HCT116 (cell line): ENCODE measurements at regions of chr18 and their contacts with region 1.

Region 1: GRCh38 chr18:70454704-70455322 is 166.0 kb downstream of the SOCS6 start:
- DNase-seq: peak; percentile 67
- ATAC-seq: peak; percentile 83
- H3K4me3 ChIP-seq: no peak overlapping the region
- H3K27ac ChIP-seq: no peak overlapping the region
- H3K4me1 ChIP-seq: 0 out of 4 replicates have a peak, but pooled peaks cover 0 to 5% of the 10 kb centered on the region in 2 experiments
- H3K27me3 ChIP-seq: no peaks in the 10 kb centered on the region
- CTCF ChIP-seq: peak; percentile 54 to 85 (median 73); a peak in 5 of 6 replicates
- POLR2A ChIP-seq: no peak
- RAD21 ChIP-seq: peak; percentile 84

Region 2: GRCh38 chr18:68847219-68847837 is 1607.5 kb before region 1 on chr18:
- CTCF ChIA-PET with region 1: no interaction called
- POLR2A ChIA-PET with region 1: no interaction called
- RAD21 ChIA-PET with region 1: no interaction called
- intact Hi-C with region 1: loop called (anchors 10 kb)
- DNase-seq: peak; percentile 19
- ATAC-seq: peak; percentile 52
- H3K4me3 ChIP-seq: no peak overlapping the region
- H3K27ac ChIP-seq: no peak overlapping the region
- H3K4me1 ChIP-seq: no peaks in the 10 kb centered on the region
- H3K27me3 ChIP-seq: no peaks in the 10 kb centered on the region
- CTCF ChIP-seq: peak; percentile 38 to 75 (median 38); a peak in 5 of 6 replicates
- POLR2A ChIP-seq: no peak
- RAD21 ChIP-seq: peak; percentile 65

Region 3: GRCh38 chr18:70107091-70107490 is 347.7 kb before region 1 on chr18:
- CTCF ChIA-PET with region 1: no interaction called
- POLR2A ChIA-PET with region 1: no interaction called
- RAD21 ChIA-PET with region 1: no interaction called
- intact Hi-C with region 1: no loop called
- DNase-seq: no peak
- ATAC-seq: no peak
- H3K4me3 ChIP-seq: no peak overlapping the region
- H3K27ac ChIP-seq: no peak overlapping the region
- H3K4me1 ChIP-seq: no peaks in the 10 kb centered on the region
- H3K27me3 ChIP-seq: no peaks in the 10 kb centered on the region
- CTCF ChIP-seq: no peak
- POLR2A ChIP-seq: no peak
- RAD21 ChIP-seq: no peak

Region 4: DNA sequence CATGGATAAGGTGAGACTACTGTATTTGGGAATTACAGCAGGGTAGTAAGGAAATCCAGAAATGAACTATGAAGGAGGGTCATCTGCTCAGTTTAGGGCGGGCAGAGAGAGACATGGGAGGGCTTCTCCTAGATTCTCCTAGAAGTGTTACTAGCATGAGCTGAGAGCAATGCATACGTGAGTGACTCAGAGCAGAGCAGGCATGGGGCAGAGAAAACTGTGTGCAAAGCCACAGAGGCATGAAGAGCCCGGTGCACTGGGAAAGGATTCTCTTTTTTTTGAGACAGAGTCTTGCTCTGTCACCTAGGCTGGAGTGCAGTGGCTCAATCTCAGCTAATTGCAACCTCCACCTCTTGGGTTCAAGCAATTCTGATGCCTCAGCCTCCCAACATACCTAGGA is 49.8 kb before region 1 on chr18:
- CTCF ChIA-PET with region 1: no interaction called
- POLR2A ChIA-PET with region 1: no interaction called
- RAD21 ChIA-PET with region 1: no interaction called
- intact Hi-C with region 1: no loop called
- DNase-seq: no peak
- ATAC-seq: no peak
- H3K4me3 ChIP-seq: no peak overlapping the region
- H3K27ac ChIP-seq: no peak overlapping the region
- H3K4me1 ChIP-seq: no peaks in the 10 kb centered on the region
- H3K27me3 ChIP-seq: no peaks in the 10 kb centered on the region
- CTCF ChIP-seq: no peak
- POLR2A ChIP-seq: no peak
- RAD21 ChIP-seq: no peak

Region 5: DNA sequence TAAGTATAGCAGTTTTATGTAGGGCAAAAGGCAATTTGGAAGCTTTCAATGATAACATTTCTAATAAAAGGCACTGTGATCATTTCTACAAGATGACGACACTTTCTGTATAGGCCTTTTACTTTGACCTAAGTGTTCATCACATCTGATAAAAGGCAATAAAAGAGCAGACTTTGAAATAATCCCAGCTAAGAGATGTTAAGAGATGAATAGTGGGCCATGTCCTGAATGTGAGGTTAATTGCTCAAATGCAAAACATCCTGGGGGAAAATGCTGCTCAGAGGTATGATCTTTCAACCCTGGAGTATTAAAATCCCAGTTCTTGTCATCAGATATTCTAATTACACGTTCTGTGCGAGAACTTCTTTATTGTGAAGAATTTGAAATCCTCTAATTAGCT is 511.6 kb after region 1 on chr18:
- CTCF ChIA-PET with region 1: no interaction called
- POLR2A ChIA-PET with region 1: no interaction called
- RAD21 ChIA-PET with region 1: no interaction called
- intact Hi-C with region 1: no loop called
- DNase-seq: no peak
- ATAC-seq: no peak
- H3K4me3 ChIP-seq: no peak overlapping the region
- H3K27ac ChIP-seq: no peak overlapping the region
- H3K4me1 ChIP-seq: no peaks in the 10 kb centered on the region
- H3K27me3 ChIP-seq: no peaks in the 10 kb centered on the region
- CTCF ChIP-seq: no peak
- POLR2A ChIP-seq: no peak
- RAD21 ChIP-seq: no peak